IMR-90 (cell line): ENCODE measurements at regions of chr2 and their contacts with region 1.

Region 1: GRCh38 chr2:36355151-36355889 is at the start of gene CRIM1:
- DNase-seq: peak; percentile 91
- ATAC-seq: peak; percentile 77
- H3K4me3 ChIP-seq: peak within 1 kb of the TSS; percentile 96
- H3K27ac ChIP-seq: peak within 1 kb of the TSS; percentile 92
- H3K4me1 ChIP-seq: peaks cover 10% of the 10 kb centered on the region
- H3K27me3 ChIP-seq: no peaks in the 10 kb centered on the region
- CTCF ChIP-seq: no peak
- POLR2A ChIP-seq: peak; percentile 98
- RAD21 ChIP-seq: 0 out of 2 replicates have a peak, but pooled peaks have one; percentile 13
- total RNA-seq, gene CRIM1: 436 and 490 TPM in 2 replicates

Region 2: DNA sequence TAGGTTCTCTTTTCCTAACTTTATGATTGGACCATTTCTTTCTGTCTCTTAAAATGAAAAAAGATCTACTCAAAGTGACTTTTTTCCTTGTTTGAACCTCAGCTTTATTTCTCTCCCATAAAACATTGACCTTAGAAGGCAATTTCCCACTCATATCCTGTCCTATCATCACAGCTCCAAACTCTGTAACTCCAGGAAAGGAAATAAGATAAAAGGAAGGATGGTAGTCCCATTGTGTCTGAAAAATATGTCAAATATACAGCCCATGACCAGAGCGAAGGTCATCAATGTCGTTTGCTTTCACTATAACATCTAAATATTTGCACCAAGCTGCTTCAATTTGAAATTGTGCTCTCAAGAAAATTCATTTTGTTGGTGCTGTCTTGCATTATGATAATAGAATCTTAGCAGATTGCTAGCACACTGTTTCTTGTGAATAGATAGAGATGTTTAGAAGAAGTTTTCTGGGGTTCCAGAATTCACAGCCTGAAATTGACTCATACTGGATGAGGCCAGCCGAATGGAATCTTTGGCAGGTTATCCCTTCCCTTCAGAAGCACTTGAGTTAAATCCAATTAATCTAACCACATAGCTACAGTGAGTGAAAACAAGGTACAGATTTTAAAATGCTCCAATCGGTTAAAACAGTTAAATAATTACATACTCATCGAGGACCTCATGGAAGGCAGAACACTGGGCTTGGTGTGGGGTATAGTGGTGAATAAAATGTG is 95.3 kb after region 1 on chr2:
- CTCF ChIA-PET with region 1: no interaction called
- POLR2A ChIA-PET with region 1: no interaction called
- dilution Hi-C with region 1: no loop called
- in situ Hi-C with region 1: no loop called
- intact Hi-C with region 1: loop called (anchors 5 kb)
- DNase-seq: peak; percentile 89
- ATAC-seq: peak; percentile 40
- H3K4me3 ChIP-seq: no peak overlapping the region
- H3K27ac ChIP-seq: no peak overlapping the region; the same call in 1 of the 2 replicates
- H3K4me1 ChIP-seq: peaks cover 44% of the 10 kb centered on the region
- H3K27me3 ChIP-seq: no peaks in the 10 kb centered on the region
- CTCF ChIP-seq: no peak
- POLR2A ChIP-seq: peak; percentile 9; the same call in 1 of the 2 replicates
- RAD21 ChIP-seq: no peak

Region 3: GRCh38 chr2:36507408-36507812 is 152.1 kb after region 1 on chr2:
- CTCF ChIA-PET with region 1: interaction called, 3 read pairs
- POLR2A ChIA-PET with region 1: no interaction called
- dilution Hi-C with region 1: no loop called
- in situ Hi-C with region 1: no loop called
- intact Hi-C with region 1: loop called (anchors 1 kb)
- DNase-seq: peak; percentile 65
- ATAC-seq: peak; percentile 94
- H3K4me3 ChIP-seq: no peak overlapping the region
- H3K27ac ChIP-seq: no peak overlapping the region
- H3K4me1 ChIP-seq: peaks cover 2% of the 10 kb centered on the region
- H3K27me3 ChIP-seq: no peaks in the 10 kb centered on the region
- CTCF ChIP-seq: peak; percentile 69
- POLR2A ChIP-seq: no peak
- RAD21 ChIP-seq: peak; percentile 79

Region 4: DNA sequence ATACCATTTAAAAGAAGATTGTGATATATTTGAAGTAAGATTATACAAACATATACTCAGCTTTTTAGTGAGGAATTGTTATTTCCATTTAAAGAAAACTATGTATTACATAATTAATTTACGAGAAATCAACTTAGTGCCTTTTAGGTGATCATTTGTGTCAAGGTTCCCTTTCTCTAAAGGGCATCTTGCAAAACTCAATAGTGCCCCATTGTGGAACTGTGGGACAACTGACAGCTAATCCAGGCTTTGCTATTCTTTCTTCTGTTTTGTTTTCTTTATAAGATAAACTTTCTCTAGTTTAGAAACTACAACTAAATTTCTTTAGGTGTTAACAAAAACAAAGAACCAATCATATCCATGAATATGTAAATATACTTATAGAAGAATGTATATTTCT is 316.9 kb after region 1 on chr2:
- CTCF ChIA-PET with region 1: interaction called, 4 read pairs
- POLR2A ChIA-PET with region 1: no interaction called
- dilution Hi-C with region 1: no loop called
- in situ Hi-C with region 1: loop called (anchors 5 kb)
- intact Hi-C with region 1: loop called (anchors 2 kb)
- DNase-seq: peak; percentile 69
- ATAC-seq: peak; percentile 69
- H3K4me3 ChIP-seq: no peak overlapping the region
- H3K27ac ChIP-seq: no peak overlapping the region
- H3K4me1 ChIP-seq: peaks cover 7% of the 10 kb centered on the region; the same call in 1 of the 2 replicates
- H3K27me3 ChIP-seq: no peaks in the 10 kb centered on the region
- CTCF ChIP-seq: peak; percentile 73
- POLR2A ChIP-seq: no peak; the same call in 1 of the 2 replicates
- RAD21 ChIP-seq: peak; percentile 84